ENCODE measurements at regions of chr17 and their contacts with region 1.

Region 1: DNA sequence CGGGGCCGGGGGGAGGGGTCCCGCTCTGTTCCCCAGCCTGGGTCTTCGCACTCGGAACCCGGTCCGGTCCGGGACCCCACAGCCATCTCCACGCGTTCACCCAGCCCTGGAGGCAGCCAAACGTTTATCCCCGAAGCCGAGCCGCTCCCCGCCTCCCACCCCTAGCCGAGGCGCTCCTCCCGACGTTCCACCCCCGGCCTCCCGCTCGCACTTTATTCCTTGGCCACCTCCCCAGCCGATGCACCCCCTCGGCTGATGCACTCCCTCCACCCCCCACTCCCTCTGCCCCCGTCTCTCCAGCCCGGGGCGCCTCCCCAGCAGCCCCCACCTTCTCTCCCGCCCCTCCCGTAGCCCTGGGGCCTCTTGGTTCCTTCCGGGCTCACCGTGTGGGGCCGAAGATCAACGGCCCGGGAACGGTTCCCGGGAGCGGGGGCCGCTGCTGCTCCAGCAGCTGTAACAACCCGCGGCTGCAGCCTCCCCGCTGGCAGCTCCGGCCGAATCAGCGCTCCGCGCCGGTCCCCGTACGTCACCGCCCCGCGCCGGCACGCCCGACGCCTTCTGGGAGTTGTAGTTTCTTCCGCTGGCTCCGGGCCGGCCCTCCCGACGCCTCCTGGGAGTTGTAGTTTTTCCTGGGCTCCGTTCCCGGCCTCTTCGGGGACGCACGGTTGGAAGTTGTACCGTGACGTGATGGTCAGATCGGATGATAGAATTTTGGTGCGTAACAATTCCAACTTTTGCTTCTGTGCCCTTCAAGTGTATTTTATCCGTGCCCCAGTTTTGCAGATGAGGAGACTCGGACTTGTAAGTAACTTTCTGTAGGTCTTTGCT is at the starts of genes LRRC3C and ORMDL3:
- DNase-seq: peak; percentile 95 to 98 (median 96)
- ATAC-seq: peak; percentile 82 to 90 (median 90)
- H3K4me3 ChIP-seq: peak within 1 kb of the TSS; percentile 59 to 96 (median 78)
- H3K27ac ChIP-seq: peak within 1 kb of the TSS; percentile 91 to 98 (median 96)
- H3K4me1 ChIP-seq: peaks cover 6 to 68% (median 49%) of the 10 kb centered on the region in 12 donors
- H3K27me3 ChIP-seq: no peaks in the 10 kb centered on the region
- CTCF ChIP-seq: no peak
- POLR2A ChIP-seq: peak; percentile 5 to 82
- total RNA-seq, gene LRRC3C: not detected
- total RNA-seq, gene ORMDL3: 40.0 to 111 (median 59.2) TPM

Region 2: DNA sequence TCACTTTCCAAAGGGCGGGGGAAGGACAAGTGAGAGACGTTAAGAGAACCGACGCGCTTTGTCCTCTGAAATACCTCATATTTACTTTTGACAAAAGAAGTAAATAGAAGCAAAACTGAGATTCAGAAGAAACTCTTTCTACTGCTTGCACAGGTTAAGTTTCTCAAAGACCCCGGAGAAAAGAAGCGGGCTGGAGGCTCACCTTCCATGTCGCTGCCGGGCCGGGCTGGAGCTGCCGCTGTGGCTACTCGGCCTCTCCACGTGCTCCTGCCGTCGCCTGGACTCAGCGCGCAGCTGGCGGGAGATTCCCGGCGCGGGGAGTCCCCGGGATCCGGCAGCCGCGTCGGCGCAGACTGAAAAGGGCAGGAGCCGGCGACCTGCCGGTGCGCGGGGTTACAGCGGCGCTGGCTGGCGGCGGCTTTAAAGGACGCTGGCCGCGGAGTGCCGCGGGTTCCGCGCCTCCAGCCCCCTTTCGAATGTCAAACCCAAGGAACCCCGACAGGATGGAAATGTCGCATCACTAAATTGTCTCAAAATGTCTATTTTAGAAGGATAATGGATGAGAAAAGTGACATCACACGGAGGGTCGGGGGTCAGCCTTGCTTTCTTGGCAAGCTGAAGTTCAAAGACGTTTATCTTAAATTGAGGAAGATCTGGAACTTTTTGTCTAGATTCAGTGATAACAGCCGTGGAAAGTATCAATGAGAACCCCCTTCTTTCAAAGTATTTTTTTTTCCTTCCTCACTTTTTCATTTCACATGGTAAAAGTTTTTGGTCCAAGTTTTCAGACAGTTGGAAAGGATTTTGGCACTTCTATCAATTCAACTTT is 63.2 kb before region 1 on chr17 and contains the start of gene IKZF3:
- intact Hi-C with region 1: loop called in 1 of 10 experiments (anchors 10 kb)
- DNase-seq: peak; percentile 28 to 79 (median 45)
- ATAC-seq: peak in 3 of 4 donors; percentile 79 to 91 (median 84)
- H3K4me3 ChIP-seq: peak within 1 kb of the TSS in 8 of 12 donors; percentile 1 to 58 (median 10)
- H3K27ac ChIP-seq: peak within 1 kb of the TSS in 1 of 12 donors; percentile 76
- H3K4me1 ChIP-seq: peaks cover 0 to 27% (median 5%) of the 10 kb centered on the region in 12 donors
- H3K27me3 ChIP-seq: peaks cover 32 to 98% (median 78%) of the 10 kb centered on the region in 9 donors
- CTCF ChIP-seq: peak in 5 of 12 donors; percentile 12 to 33 (median 25)
- POLR2A ChIP-seq: no peak
- total RNA-seq, gene IKZF3: 0.07 to 6.9 (median 0.22) TPM

Region 3: DNA sequence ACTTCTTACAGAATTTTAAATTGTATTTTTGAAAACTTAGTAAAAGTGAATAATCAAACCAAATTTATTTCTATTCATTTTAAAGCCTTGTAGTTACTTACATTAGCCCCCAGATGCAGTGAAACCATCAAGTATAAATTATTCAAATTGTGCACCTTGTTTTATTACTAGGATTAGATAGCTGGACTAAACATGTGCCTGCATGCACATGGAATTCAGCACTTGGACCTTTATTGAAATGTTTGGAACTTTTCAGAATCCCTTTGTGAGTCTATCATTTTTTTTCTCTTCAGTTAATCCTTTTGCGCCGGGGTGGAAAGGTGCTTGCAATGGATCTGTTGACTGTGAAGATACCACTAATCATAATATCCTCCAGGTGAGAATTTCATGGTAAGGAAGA is 54.6 kb before region 1 on chr17:
- intact Hi-C with region 1: loop called in 2 of 10 experiments (anchors 5 to 10 kb)
- DNase-seq: no peak
- ATAC-seq: no peak
- H3K4me3 ChIP-seq: no peak overlapping the region
- H3K27ac ChIP-seq: no peak overlapping the region
- H3K4me1 ChIP-seq: no peaks in the 10 kb centered on the region
- H3K27me3 ChIP-seq: peaks cover 5 to 63% (median 11%) of the 10 kb centered on the region in 9 donors
- CTCF ChIP-seq: peak in 5 of 12 donors; percentile 14 to 51 (median 32)
- POLR2A ChIP-seq: no peak

Region 4: DNA sequence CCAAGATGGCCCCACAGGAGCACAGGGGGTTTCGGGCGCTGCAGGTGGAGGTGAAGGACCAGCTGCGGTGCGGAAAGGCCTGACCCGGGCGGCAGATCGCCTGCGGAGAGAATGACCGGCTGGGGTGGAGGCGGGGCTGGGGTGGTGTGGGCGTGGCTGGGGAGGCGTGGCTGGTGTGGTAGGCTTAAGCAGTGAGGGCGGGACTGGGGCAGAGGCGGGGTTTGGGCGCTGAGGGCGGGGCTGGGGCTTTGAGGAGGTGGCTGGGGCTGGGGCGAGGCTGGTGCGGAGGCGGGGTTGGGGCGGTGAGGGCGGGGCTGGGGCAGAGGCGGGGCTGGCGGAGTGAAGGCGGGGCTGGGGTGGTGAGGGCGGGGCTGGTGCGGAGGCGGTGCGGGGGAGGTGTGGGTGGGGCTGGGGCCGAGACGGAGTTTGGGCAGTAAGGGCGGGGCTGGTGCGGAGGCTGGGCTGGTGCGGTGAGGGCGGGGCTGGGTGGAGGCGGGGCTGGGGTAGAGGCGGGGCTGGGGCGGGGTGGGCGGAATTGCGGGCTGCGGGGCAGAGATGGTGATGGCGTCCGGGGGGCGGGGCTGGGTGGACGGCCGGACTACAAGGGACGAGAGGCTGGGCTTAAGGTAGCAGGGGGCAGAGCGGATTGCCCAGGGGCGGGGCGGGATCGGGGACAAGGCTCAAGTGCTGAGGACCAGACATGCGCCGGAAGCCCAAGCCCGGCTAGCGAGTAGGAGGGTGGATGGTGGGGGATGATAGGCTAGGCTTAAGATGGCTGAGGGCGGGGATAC is 25.6 kb after region 1 on chr17:
- intact Hi-C with region 1: loop called in 7 of 10 experiments (anchors 1 to 5 kb)
- DNase-seq: peak; percentile 98 to 99 (median 98)
- ATAC-seq: peak; percentile 92 to 95 (median 94)
- H3K4me3 ChIP-seq: peak overlapping the region in 10 of 12 donors; percentile 26 to 62 (median 48)
- H3K27ac ChIP-seq: peak overlapping the region in 10 of 12 donors; percentile 2 to 78 (median 60)
- H3K4me1 ChIP-seq: peaks cover 0 to 33% (median 13%) of the 10 kb centered on the region in 12 donors
- H3K27me3 ChIP-seq: no peaks in the 10 kb centered on the region
- CTCF ChIP-seq: no peak
- POLR2A ChIP-seq: peak in 1 of 2 donors; percentile 35

Region 5: DNA sequence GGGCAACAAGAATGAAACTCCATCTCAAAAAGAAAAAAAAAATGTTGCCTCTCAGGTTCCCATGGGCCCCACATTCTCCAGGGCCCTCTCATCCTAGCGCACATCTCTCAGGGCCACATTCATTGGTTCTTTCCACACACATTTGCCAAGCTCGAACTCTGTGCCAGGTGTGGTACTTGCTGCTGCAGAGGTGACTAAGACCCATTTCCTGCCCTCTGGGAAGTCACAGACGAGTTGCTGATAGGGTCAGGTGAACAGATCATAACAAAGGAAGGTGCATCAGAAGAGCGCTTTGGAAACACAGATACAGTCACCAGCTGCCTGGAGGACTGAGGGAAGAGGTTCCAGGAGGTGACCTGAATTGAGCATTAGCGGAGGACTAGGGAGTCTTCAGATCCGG is 36.5 kb after region 1 on chr17:
- intact Hi-C with region 1: loop called in 2 of 10 experiments (anchors 1 to 5 kb)
- DNase-seq: no peak
- ATAC-seq: no peak
- H3K4me3 ChIP-seq: no peak overlapping the region
- H3K27ac ChIP-seq: no peak overlapping the region
- H3K4me1 ChIP-seq: peaks cover 0 to 27% (median 1%) of the 10 kb centered on the region in 12 donors
- H3K27me3 ChIP-seq: peaks cover 0 to 10% (median 0%) of the 10 kb centered on the region in 9 donors
- CTCF ChIP-seq: no peak
- POLR2A ChIP-seq: no peak

Region 6: GRCh38 chr17:39972271-39972670 is 45.0 kb after region 1 on chr17:
- intact Hi-C with region 1: loop called in 1 of 10 experiments (anchors 5 kb)
- DNase-seq: no peak
- ATAC-seq: peak in 2 of 4 donors; percentile 26 to 59
- H3K4me3 ChIP-seq: no peak overlapping the region
- H3K27ac ChIP-seq: peak overlapping the region in 1 of 12 donors; percentile 81
- H3K4me1 ChIP-seq: peaks cover 0 to 63% (median 0%) of the 10 kb centered on the region in 12 donors
- H3K27me3 ChIP-seq: peaks cover 0 to 11% (median 0%) of the 10 kb centered on the region in 9 donors
- CTCF ChIP-seq: no peak
- POLR2A ChIP-seq: no peak

Region 7: DNA sequence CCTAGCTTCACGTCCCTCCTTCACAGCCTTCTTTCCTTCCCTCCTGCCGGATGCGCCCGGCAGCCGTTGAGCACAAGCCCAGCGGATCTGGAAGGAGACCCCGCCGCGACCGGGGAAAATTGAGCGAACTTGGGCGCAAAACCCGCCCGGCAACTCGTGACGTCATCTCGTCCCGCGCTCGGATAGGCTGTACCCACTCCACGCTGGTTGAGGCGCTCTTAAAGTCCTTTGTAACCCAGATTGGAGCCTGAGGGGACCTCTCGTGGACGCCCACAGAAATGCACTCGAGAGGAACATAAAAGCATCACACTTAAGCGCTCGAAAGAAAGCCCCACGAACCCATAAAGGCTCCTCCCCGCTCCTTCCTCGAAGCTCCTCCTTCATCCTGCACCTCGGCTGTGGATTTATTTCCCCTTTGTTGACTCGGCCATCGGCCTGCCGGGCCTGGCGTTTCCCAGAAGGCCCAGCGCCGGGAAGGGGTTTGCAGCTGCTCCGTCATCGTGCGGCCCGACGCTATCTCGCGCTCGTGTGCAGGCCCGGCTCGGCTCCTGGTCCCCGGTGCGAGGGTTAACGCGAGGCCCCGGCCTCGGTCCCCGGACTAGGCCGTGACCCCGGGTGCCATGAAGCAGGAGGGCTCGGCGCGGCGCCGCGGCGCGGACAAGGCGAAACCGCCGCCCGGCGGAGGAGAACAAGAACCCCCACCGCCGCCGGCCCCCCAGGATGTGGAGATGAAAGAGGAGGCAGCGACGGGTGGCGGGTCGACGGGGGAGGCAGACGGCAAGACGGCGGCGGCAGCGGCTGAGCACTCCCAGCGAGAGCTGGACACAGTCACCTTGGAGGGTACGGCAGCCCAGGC is 53.3 kb after region 1 on chr17 and contains the start of gene PSMD3:
- intact Hi-C with region 1: loop called in 3 of 10 experiments (anchors 1 to 2 kb)
- DNase-seq: peak; percentile 98
- ATAC-seq: peak; percentile 96 to 99 (median 98)
- H3K4me3 ChIP-seq: peak within 1 kb of the TSS; percentile 74 to 100 (median 95)
- H3K27ac ChIP-seq: peak within 1 kb of the TSS; percentile 70 to 99 (median 92)
- H3K4me1 ChIP-seq: peaks cover 7 to 34% (median 23%) of the 10 kb centered on the region in 12 donors
- H3K27me3 ChIP-seq: peaks cover 0 to 3% (median 0%) of the 10 kb centered on the region in 9 donors
- CTCF ChIP-seq: peak; percentile 66 to 94 (median 80)
- POLR2A ChIP-seq: peak; percentile 15 to 86
- total RNA-seq, gene PSMD3: 68.9 to 117 (median 83.3) TPM

Region 8: GRCh38 chr17:40157973-40158372 is 230.7 kb after region 1 on chr17:
- intact Hi-C with region 1: no loop called
- DNase-seq: no peak
- ATAC-seq: no peak
- H3K4me3 ChIP-seq: no peak overlapping the region
- H3K27ac ChIP-seq: peak overlapping the region in 1 of 12 donors; percentile 50
- H3K4me1 ChIP-seq: peaks cover 0 to 25% (median 7%) of the 10 kb centered on the region in 12 donors
- H3K27me3 ChIP-seq: no peaks in the 10 kb centered on the region
- CTCF ChIP-seq: no peak
- POLR2A ChIP-seq: no peak